Activated CD4-positive, alpha-beta T cell treated with anti-CD3 and anti-CD28 coated beads for 36 hours (primary cell): ENCODE measurements at regions of chr14 and their contacts with region 1.

Region 1: DNA sequence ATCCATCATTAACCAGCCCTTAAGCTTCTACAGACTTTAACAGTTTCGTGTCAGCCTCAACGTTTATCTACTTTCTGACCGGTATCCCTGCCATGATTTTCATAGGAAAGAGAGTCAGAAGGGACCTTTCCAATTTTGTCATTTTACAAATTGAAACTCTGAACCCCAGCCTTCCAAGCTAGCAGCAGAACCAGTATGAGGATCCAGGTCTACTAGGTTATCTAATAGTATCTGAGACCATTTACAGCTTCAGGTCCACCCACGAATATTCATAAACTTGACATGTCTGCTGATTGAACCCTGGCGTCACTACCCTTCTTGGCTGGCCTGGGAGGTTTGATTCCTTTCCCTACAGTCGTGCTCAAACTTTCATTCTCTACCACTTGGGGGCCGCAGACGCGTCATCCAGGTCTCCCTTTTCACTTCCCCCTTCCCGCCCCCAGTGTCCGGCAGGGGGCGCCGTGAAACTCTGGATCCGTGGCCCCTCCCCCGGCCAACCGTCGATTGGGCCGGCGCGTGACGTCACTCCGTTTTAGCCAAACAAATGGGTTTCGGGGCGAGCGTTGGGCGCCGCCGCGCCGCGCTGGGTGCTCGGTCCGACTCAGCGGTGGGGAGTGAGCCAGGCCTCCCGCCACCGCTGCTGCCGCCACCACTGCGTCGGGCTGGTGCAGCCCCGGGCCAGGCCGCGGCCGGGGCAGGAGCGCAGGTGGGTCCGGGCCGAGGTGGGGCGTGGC is at the start of gene FBXO34:
- DNase-seq: peak; percentile 100
- ATAC-seq: peak; percentile 89
- H3K4me3 Mint-ChIP-seq: peak within 1 kb of the TSS; percentile 87
- H3K27ac Mint-ChIP-seq: peak within 1 kb of the TSS; percentile 93
- H3K4me1 Mint-ChIP-seq: peaks cover 39% of the 10 kb centered on the region
- H3K27me3 Mint-ChIP-seq: no peaks in the 10 kb centered on the region
- total RNA-seq, gene FBXO34: 18.5 to 18.9 TPM

Region 2: DNA sequence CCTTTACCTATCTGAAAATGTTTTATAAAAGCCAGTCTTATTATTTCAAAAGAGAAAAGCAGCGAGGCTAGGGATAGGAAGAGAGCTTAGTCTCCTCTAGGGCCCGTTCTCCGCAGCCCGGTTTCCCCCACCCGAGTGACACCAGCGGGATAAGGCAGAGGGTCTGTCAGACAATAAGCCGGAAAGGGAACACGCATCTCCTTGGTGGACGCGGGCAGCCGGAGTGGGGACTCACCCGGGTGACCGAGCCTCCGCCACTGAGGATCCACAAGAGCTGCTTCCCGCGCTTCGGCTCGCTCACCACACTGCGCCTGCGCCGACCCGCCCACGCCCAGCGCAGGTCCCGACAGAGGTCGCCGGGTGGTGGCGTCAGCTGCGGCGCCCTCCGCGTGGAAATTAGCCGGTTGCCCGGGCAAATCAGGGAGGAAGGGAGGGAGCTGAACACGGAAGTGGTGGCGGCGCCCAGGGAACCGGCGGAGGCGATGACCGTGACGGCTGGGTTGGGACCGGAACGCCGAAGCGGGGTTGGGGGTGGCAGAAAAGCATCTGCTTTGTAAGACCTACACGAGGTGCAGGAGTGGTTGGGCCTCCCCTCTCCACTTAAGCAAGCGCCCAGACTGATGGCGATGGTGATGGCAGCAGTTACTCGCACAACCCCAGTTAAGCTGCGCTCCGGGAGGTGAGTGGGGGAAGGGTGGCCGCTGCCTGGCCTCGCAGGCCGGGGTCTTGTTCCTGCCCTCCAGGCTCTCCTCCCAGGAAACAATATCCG is 244.0 kb before region 1 on chr14 and contains the starts of genes SOCS4 and WDHD1:
- CTCF ChIA-PET with region 1: no interaction called
- POLR2A ChIA-PET with region 1: interaction called, 3 read pairs
- intact Hi-C with region 1: loop called in 1 of 2 experiments (anchors 5 kb)
- DNase-seq: peak; percentile 98
- ATAC-seq: peak; percentile 93
- H3K4me3 Mint-ChIP-seq: peak within 1 kb of the TSS; percentile 95
- H3K27ac Mint-ChIP-seq: peak within 1 kb of the TSS; percentile 97
- H3K4me1 Mint-ChIP-seq: peaks cover 47% of the 10 kb centered on the region
- H3K27me3 Mint-ChIP-seq: no peaks in the 10 kb centered on the region
- total RNA-seq, gene SOCS4: 18.4 to 21.3 TPM
- total RNA-seq, gene WDHD1: 64.4 to 71.1 TPM

Region 3: DNA sequence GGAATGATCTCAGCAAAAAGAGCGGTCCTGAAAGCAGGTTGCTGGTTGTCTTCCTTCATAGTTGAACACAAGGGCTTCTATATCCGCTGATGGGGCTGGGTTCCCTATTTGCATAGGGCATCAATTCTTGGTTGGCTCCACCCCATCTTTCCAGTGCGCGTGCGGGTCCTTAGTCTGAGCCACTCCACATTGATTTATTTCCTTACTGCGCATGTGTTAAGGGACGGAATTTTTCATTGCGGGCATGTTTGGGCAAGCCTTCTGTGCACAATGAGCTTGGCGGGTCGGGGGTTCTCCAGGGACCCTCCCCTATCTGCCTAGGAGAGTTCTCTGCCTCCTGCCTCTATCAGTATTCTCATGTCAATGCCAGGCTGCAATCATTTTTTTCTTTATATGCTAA is 58.4 kb before region 1 on chr14:
- CTCF ChIA-PET with region 1: interaction called, 7 read pairs
- POLR2A ChIA-PET with region 1: no interaction called
- intact Hi-C with region 1: loop called in 1 of 2 experiments (anchors 2 kb)
- DNase-seq: no peak
- ATAC-seq: no peak
- H3K4me3 Mint-ChIP-seq: no peak overlapping the region
- H3K27ac Mint-ChIP-seq: no peak overlapping the region
- H3K4me1 Mint-ChIP-seq: peaks cover 4% of the 10 kb centered on the region
- H3K27me3 Mint-ChIP-seq: no peaks in the 10 kb centered on the region

Region 4: DNA sequence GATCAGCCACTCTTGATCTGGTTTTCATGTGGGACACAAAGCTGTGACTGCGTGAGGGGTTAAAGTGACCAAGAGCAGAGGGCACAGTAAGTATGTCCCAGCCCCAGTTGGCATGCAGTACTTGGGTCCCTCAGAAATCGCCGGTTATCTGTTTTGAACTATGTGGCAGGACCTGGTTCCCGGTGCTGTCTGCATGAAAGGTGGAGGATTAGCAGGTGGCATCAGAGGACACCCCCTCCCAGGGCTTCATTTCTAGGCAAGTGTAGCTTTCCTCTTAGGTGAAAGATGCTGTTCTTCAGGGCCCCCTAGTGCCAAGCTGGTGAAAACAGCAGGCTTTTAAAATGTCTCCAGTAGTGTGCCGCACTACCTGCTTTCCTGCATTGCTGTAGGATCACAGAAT is 83.5 kb after region 1 on chr14:
- CTCF ChIA-PET with region 1: interaction called, 96 read pairs
- POLR2A ChIA-PET with region 1: interaction called, 5 read pairs
- intact Hi-C with region 1: loop called (anchors 1 kb)
- DNase-seq: peak; percentile 75
- ATAC-seq: peak; percentile 93
- H3K4me3 Mint-ChIP-seq: no peak overlapping the region
- H3K27ac Mint-ChIP-seq: peak overlapping the region; percentile 87
- H3K4me1 Mint-ChIP-seq: peaks cover 23% of the 10 kb centered on the region
- H3K27me3 Mint-ChIP-seq: no peaks in the 10 kb centered on the region

Region 5: DNA sequence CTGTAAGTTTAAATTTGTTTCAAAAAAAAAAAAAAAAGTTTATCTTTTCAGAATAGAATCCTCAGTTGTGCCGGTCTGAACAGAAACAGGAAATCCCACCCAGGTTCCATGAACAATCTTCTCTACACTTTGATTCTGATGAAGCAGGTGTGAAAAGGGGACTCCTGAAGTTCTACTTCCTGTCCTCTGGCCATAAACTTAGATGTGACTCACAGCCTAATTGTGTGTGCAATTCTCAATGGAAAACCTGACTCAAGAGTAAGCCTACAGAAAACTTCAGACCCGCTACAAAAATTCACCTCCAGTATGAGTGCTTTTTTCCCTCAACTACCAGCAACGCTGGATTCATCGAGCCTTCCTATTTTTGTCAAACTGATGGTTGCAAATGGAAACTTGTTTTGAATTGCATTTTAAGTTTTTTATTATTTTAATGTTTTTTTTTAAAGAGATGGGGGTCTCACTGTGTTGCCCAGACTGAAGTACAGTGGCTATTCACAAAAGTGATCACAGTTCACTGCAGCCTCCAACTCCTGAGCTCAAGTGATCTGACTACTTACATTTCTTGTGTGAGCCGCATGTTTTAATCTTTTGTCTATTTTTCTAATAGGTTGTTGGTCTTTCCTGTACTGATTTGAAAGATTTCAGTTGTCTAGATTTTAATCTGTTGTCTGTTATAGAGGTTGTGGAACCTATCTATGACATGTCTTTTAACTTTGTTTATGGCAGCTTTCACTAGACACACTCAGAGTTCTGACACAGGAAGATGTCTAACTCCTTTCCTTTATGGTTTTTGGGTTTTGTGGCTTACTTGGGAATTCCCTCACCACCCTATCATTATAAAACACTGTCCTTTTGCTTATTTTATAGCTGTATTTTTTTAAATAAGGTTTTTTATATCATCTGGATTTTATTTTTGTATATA is 103.0 kb after region 1 on chr14:
- CTCF ChIA-PET with region 1: interaction called, 6 read pairs
- POLR2A ChIA-PET with region 1: no interaction called
- intact Hi-C with region 1: loop called in 1 of 2 experiments (anchors 1 kb)
- DNase-seq: peak; percentile 39
- ATAC-seq: peak; percentile 88
- H3K4me3 Mint-ChIP-seq: peak overlapping the region; percentile 45
- H3K27ac Mint-ChIP-seq: peak overlapping the region; percentile 96
- H3K4me1 Mint-ChIP-seq: peaks cover 46% of the 10 kb centered on the region
- H3K27me3 Mint-ChIP-seq: no peaks in the 10 kb centered on the region

Region 6: DNA sequence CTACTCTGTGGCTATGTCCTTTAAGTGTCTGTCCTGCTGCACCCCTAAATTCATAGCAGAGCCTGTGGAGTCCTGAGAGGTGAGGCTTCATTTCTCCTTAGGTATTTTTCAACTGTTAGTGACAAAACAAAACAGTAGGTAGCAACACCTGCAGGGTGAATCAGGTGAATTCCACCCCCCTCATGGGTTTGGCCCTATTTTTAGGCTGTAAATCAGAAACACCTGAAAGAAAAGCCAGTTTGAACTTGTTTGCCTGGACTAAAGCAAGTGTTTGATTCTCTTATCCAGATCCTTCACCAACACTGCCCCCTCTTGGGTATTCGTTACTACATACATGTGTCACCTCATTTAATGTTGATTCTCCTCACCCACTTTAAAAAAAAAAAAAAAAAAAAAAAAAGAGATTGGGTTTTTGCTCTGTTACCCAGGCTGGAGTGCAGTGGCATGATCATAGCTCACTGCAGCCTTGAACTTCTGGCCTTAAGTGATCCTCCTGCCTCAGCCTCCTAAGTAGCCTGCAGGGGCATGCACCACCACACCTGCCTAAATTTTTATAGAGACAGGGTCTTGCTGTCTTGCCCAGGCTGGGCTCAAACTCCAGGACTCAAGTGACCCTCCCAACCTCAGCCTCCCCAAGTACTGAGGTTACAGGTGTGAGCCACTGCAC is 159.2 kb after region 1 on chr14:
- CTCF ChIA-PET with region 1: interaction called, 9 read pairs
- POLR2A ChIA-PET with region 1: no interaction called
- intact Hi-C with region 1: loop called (anchors 1 kb)
- DNase-seq: peak; percentile 54
- ATAC-seq: peak; percentile 93
- H3K4me3 Mint-ChIP-seq: no peak overlapping the region
- H3K27ac Mint-ChIP-seq: peak overlapping the region; percentile 65
- H3K4me1 Mint-ChIP-seq: peaks cover 30% of the 10 kb centered on the region
- H3K27me3 Mint-ChIP-seq: no peaks in the 10 kb centered on the region